ENCODE measurements at regions of chr5 and their contacts with region 1.

Region 1: GRCh38 chr5:163564321-163564938 is 59.0 kb downstream of the MAT2B start:
- DNase-seq: peak; percentile 13 to 71 (median 64)
- ATAC-seq: peak; percentile 59
- H3K4me3 ChIP-seq: no peak overlapping the region
- H3K4me3 Mint-ChIP-seq: no peak overlapping the region
- H3K27ac ChIP-seq: no peak overlapping the region
- H3K27ac Mint-ChIP-seq: no peak overlapping the region
- H3K4me1 ChIP-seq: peaks cover 14% of the 10 kb centered on the region
- H3K4me1 Mint-ChIP-seq: peaks cover 23% of the 10 kb centered on the region
- H3K27me3 ChIP-seq: peaks cover 6 to 10% of the 10 kb centered on the region in 2 experiments
- H3K27me3 Mint-ChIP-seq: peaks cover 66% of the 10 kb centered on the region
- CTCF ChIP-seq: peak; percentile 92

Region 2: GRCh38 chr5:163373428-163374084 is 190.9 kb before region 1 on chr5:
- CTCF ChIA-PET with region 1: no interaction called
- POLR2A ChIA-PET with region 1: no interaction called
- intact Hi-C with region 1: no loop called
- DNase-seq: no peak
- ATAC-seq: no peak
- H3K4me3 ChIP-seq: no peak overlapping the region
- H3K4me3 Mint-ChIP-seq: no peak overlapping the region
- H3K27ac ChIP-seq: no peak overlapping the region
- H3K27ac Mint-ChIP-seq: no peak overlapping the region
- H3K4me1 ChIP-seq: no peaks in the 10 kb centered on the region
- H3K4me1 Mint-ChIP-seq: no peaks in the 10 kb centered on the region
- H3K27me3 ChIP-seq: no peaks in the 10 kb centered on the region
- H3K27me3 Mint-ChIP-seq: peaks cover 9% of the 10 kb centered on the region
- CTCF ChIP-seq: no peak

Region 3: GRCh38 chr5:164504141-164504772 is 939.8 kb after region 1 on chr5:
- CTCF ChIA-PET with region 1: interaction called, 3 read pairs
- POLR2A ChIA-PET with region 1: no interaction called
- intact Hi-C with region 1: loop called in 1 of 2 experiments (anchors 2 kb)
- DNase-seq: peak in 2 of 9 experiments; percentile 15 to 34
- ATAC-seq: no peak
- H3K4me3 ChIP-seq: no peak overlapping the region
- H3K4me3 Mint-ChIP-seq: no peak overlapping the region
- H3K27ac ChIP-seq: no peak overlapping the region
- H3K27ac Mint-ChIP-seq: no peak overlapping the region
- H3K4me1 ChIP-seq: no peaks in the 10 kb centered on the region
- H3K4me1 Mint-ChIP-seq: no peaks in the 10 kb centered on the region
- H3K27me3 ChIP-seq: no peaks in the 10 kb centered on the region
- H3K27me3 Mint-ChIP-seq: no peaks in the 10 kb centered on the region
- CTCF ChIP-seq: no peak

Region 4: DNA sequence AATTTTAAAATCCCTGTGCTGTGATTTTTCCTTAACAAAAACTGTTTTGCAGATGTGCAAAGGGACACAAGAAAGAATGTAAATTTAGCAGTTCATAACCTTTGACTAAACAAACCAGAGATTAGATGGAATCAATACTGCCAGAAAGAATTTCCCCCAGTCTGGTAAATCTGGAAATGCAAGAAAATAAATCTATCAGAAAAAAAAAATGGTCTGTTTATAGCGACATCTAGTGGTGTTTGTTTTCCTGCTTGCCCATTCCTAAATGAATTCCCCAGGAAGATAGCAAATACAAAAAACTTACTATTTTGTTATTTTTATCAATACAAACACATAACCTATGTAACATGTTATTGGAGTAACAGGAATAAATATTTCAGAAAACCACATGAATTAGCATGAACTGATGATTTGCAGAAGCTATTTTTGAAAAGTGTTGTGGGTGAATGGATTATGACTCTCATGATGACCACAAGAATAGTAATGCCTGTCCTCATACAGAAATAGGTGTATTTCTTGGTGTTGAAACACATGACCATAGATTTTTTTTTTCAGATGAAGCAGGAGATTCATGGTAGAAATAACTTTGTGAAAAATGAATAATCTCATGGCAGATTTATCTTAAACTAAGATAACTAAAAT is 1644.8 kb after region 1 on chr5:
- CTCF ChIA-PET with region 1: interaction called, 4 read pairs
- POLR2A ChIA-PET with region 1: no interaction called
- intact Hi-C with region 1: loop called in 1 of 2 experiments (anchors 2 kb)
- DNase-seq: peak in 2 of 9 experiments; percentile 1 to 13
- ATAC-seq: no peak
- H3K4me3 ChIP-seq: no peak overlapping the region
- H3K4me3 Mint-ChIP-seq: no peak overlapping the region
- H3K27ac ChIP-seq: no peak overlapping the region
- H3K27ac Mint-ChIP-seq: no peak overlapping the region
- H3K4me1 ChIP-seq: no peaks in the 10 kb centered on the region
- H3K4me1 Mint-ChIP-seq: no peaks in the 10 kb centered on the region
- H3K27me3 ChIP-seq: no peaks in the 10 kb centered on the region
- H3K27me3 Mint-ChIP-seq: no peaks in the 10 kb centered on the region
- CTCF ChIP-seq: peak; percentile 36

Measured in CD8-positive, alpha-beta T cell (primary cell).